ENCODE measurements at regions of chr17 and their contacts with region 1.

Region 1: GRCh38 chr17:29918922-29919856 is 10.8 kb downstream of the SSH2 start:
- DNase-seq: no peak

Region 2: GRCh38 chr17:31462261-31462660 is 1543.1 kb after region 1 on chr17:
- intact Hi-C with region 1: loop called in 1 of 2 experiments (anchors 5 kb)
- DNase-seq: no peak

Measured in posterior vena cava (tissue), 2 donors.